Activated CD8-positive, alpha-beta memory T cell treated with anti-CD3 and anti-CD28 coated beads, Interleukin-2, amount 10 ng/mL, durations not matched to agents 7 days and 5 days (primary cell): ENCODE measurements at regions of chr20 and their contacts with region 1.

Region 1: DNA sequence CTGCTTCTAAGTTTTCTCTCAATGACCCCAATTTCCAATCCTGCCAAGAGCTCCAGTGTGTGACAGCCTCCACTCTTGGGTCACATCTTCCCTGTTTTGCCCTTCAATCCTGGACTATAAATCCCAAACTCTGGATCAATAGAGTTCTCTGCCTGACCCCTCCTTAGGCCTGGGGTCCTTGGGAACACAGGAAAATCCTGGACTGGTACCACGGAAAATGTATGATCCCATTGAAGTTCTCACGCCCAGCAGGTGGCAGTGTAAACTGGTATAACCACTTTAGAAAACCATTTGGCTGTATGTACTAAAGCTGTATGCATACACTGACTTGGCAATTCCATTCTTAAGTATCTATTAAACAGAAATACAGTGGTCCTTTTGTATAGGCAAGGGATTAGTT is 98.0 kb downstream of the SNAP25 start:
- DNase-seq: no peak
- ATAC-seq: no peak
- H3K4me3 Mint-ChIP-seq: no peak overlapping the region
- H3K27ac Mint-ChIP-seq: no peak overlapping the region
- H3K4me1 Mint-ChIP-seq: peaks cover 3% of the 10 kb centered on the region
- H3K27me3 Mint-ChIP-seq: peaks cover 29% of the 10 kb centered on the region

Region 2: DNA sequence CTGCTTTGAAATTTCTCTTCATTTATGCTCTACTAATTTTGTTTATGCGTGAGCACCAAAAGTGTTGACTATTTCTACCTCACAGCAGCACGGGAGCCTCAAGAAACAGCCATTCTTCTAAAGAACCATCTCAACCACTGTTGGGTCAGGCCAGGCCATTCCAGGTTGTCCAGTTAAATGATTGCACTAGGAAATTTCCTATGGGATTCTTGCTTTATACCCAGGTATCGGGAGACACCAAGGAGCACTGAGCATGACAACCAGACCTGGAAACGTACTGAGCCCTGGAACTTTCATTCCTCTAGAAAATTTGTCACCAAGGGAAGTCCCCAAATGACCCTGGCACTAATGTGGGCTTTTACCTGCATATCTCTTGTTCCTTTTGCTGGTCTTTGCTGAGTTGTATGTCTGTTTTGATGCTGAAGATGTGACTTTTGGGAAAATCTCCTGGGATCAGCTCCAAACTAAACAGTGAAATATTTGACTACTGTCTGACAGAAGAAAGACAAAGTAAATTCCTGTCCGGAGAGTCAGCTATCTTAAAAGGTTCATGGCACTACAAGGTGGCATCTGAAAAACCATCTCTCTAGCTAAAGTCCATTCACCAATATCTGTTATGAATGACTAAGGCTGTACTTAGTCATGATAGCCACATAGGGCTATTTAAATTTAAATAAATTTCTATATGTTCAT is 27.5 kb before region 1 on chr20:
- CTCF ChIA-PET with region 1: no interaction called
- DNase-seq: no peak
- ATAC-seq: no peak
- H3K4me3 Mint-ChIP-seq: no peak overlapping the region
- H3K27ac Mint-ChIP-seq: no peak overlapping the region
- H3K4me1 Mint-ChIP-seq: no peaks in the 10 kb centered on the region
- H3K27me3 Mint-ChIP-seq: peaks cover 3% of the 10 kb centered on the region

Region 3: GRCh38 chr20:10381493-10381892 is 64.9 kb after region 1 on chr20:
- CTCF ChIA-PET with region 1: interaction called, 10 read pairs
- DNase-seq: no peak
- ATAC-seq: no peak
- H3K4me3 Mint-ChIP-seq: no peak overlapping the region
- H3K27ac Mint-ChIP-seq: no peak overlapping the region
- H3K4me1 Mint-ChIP-seq: no peaks in the 10 kb centered on the region
- H3K27me3 Mint-ChIP-seq: peaks cover 13% of the 10 kb centered on the region